Right ventricle myocardium inferior (tissue), 1 donor: ENCODE measurements at regions of chr17 and their contacts with region 1.

Region 1: DNA sequence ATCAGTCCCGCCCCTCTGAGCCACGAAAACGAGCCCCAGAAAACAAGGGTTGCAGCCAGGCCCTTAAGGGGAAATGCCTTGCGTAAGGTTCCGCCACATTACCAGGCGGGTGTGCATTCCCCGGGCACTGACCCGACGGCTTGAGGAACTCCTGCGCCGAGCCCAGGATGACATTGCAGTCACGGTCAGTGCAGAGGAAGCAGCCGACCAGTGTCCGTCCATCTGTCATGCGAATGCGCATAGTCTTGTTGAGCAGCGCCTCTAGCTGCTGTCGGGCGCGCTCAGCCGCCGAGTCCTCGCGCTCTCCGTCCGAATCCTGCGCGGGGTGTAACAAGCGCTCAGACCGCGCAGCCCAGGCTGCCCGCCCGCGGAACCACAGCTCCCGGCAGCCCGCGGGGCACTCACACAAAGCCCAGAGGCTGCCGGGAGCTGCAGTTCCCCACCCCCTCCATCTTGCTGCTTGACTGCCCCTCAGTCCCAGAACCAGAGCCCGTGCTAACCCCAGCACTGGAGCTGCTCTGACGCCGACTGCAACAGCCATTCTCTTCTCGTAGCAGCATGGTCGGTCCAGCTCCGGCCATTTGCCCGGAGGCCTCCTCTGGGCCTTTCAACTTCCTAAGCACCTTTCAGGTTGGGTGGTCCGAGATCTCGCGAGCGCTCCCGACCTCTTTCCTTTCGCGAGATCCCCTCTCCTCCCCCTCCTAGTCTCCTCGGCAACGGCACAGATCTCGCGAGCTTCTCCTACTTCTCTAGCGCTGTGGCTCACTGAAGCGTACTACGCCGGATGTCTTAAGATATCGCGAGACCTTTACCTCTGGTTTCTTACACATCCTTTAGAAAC is at the start of gene NAA38:
- DNase-seq: peak; percentile 97
- ATAC-seq: peak; percentile 91
- total RNA-seq, gene NAA38: 105 TPM

Region 2: GRCh38 chr17:7572588-7573323 is 284.3 kb before region 1 on chr17:
- intact Hi-C with region 1: loop called (anchors 10 kb)
- DNase-seq: peak; percentile 99
- ATAC-seq: peak; percentile 96

Region 3: GRCh38 chr17:7809086-7809790 is 47.9 kb before region 1 on chr17:
- intact Hi-C with region 1: no loop called
- DNase-seq: no peak
- ATAC-seq: no peak

Region 4: GRCh38 chr17:7844292-7845154 is 12.6 kb before region 1 on chr17:
- intact Hi-C with region 1: loop called (anchors 2 kb)
- DNase-seq: peak; percentile 96
- ATAC-seq: peak; percentile 82

Region 5: GRCh38 chr17:7867881-7868329 is 10.8 kb after region 1 on chr17:
- intact Hi-C with region 1: no loop called
- DNase-seq: no peak
- ATAC-seq: no peak

Region 6: GRCh38 chr17:7931709-7932482 is 74.8 kb after region 1 on chr17 and contains the starts of genes CNTROB and TRAPPC1:
- intact Hi-C with region 1: loop called (anchors 5 kb)
- DNase-seq: peak; percentile 100
- ATAC-seq: peak; percentile 100
- total RNA-seq, gene CNTROB: 9.6 TPM
- total RNA-seq, gene TRAPPC1: 118 TPM